ENCODE measurements at regions of chr1 and their contacts with region 1.

Region 1: GRCh38 chr1:155250633-155251449 is 4.4 kb downstream of the ENTREP3 start:
- DNase-seq: peak; percentile 91 to 98
- ATAC-seq: peak; percentile 82 to 92
- H3K4me3 ChIP-seq: no peak overlapping the region
- H3K27ac ChIP-seq: peak overlapping the region in 1 of 2 experiments; percentile 76; a peak in 3 of 6 replicates
- H3K4me1 ChIP-seq: peaks cover 19% of the 10 kb centered on the region
- CTCF ChIP-seq: peak; percentile 99
- EP300 ChIP-seq: no peak
- POLR2A ChIP-seq: no peak
- RAD21 ChIP-seq: peak; percentile 88 to 90

Region 2: GRCh38 chr1:154747740-154748404 is 503.0 kb before region 1 on chr1:
- CTCF ChIA-PET with region 1: no interaction called
- POLR2A ChIA-PET with region 1: no interaction called
- DNase-seq: no peak
- ATAC-seq: no peak
- H3K4me3 ChIP-seq: no peak overlapping the region
- H3K27ac ChIP-seq: no peak overlapping the region
- H3K4me1 ChIP-seq: no peaks in the 10 kb centered on the region
- CTCF ChIP-seq: no peak
- EP300 ChIP-seq: no peak
- POLR2A ChIP-seq: no peak
- RAD21 ChIP-seq: no peak

Region 3: DNA sequence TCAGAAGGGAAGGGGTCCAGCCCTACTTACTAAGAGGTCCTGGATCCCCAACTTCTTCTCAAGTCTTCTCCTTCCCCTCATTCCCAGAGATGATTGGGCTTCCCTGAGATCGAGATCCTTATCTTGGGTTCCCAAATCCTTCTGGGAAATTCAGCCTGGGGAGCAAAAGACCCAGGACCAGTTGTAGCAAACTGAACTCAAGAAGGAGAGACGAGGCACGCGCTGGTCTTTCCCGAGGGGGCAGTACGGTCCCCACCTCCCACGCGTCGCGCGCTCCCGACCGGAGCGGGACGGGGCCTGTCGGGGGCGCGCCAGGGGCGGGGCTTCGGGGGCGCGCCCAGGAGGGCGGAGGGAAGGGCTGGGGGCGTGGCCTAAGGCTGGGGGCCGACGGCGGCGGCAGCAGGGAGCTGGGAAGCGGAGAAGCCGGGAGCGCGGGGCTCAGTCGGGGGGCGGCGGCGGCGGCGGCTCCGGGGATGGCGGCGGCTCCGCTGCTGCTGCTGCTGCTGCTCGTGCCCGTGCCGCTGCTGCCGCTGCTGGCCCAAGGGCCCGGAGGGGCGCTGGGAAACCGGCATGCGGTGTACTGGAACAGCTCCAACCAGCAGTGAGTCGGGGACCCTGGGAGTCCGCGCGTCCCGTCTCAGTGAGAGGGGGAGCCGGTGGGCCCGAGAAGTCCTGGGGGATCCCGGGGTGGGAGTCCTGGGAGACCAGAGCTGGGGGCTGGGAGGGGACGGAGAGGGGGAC is 172.2 kb before region 1 on chr1 and contains the start of gene EFNA3:
- CTCF ChIA-PET with region 1: no interaction called
- POLR2A ChIA-PET with region 1: no interaction called
- DNase-seq: peak; percentile 50 to 77
- ATAC-seq: peak; percentile 9 to 41; a peak in 4 of 6 replicates
- H3K4me3 ChIP-seq: peak within 1 kb of the TSS; percentile 55
- H3K27ac ChIP-seq: peak within 1 kb of the TSS; percentile 50 to 78; a peak in 5 of 6 replicates
- H3K4me1 ChIP-seq: peaks cover 44% of the 10 kb centered on the region
- CTCF ChIP-seq: no peak
- EP300 ChIP-seq: no peak
- POLR2A ChIP-seq: no peak
- RAD21 ChIP-seq: no peak
- polyA plus RNA-seq, gene EFNA3: 1.9 and 2.6 TPM in 2 replicates

Region 4: DNA sequence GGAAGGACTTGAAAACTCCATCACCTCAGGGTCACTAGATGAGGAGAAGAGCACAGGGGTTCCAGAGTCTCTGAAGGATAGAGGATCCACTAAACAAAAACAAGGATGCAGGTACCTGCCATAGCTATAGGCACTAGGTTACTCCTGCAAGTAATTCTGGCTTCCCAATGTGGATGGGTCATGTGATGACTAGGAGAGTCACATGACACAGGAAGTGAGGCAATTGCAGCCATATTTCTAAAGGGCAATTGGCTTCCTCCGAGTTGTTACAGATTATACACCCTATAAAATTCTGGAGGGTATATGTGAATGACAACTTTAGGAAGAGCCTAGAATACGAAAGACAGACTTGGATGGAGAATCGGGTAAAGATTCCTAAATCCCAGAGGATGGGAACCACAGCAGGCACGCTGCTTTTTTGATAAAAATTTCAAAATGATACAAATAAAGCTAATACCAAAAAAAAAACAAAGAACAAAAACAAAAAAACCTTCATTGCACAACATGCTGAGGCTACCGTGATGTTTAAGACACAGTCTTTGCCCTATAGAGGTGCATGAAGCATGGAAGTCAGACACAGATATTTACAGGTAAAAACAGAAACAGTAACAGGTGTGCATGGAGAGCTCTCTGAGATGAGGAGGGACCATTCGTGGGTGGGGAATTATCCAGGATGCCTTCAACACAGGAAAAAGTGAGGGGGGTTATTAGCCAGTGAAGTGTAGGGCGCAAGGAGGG is 31.8 kb before region 1 on chr1:
- CTCF ChIA-PET with region 1: interaction called, 27 read pairs
- POLR2A ChIA-PET with region 1: no interaction called
- DNase-seq: peak in 1 of 2 experiments; percentile 62
- ATAC-seq: peak in 1 of 2 experiments; percentile 37; a peak in 3 of 6 replicates
- H3K4me3 ChIP-seq: no peak overlapping the region
- H3K27ac ChIP-seq: no peak overlapping the region
- H3K4me1 ChIP-seq: peaks cover 15% of the 10 kb centered on the region
- CTCF ChIP-seq: no peak
- EP300 ChIP-seq: no peak
- POLR2A ChIP-seq: no peak
- RAD21 ChIP-seq: no peak

Region 5: GRCh38 chr1:155261852-155262673 is 11.2 kb after region 1 on chr1 and contains the start of gene SCAMP3:
- CTCF ChIA-PET with region 1: interaction called, 326 read pairs
- POLR2A ChIA-PET with region 1: interaction called, 13 read pairs
- DNase-seq: peak; percentile 99 to 100
- ATAC-seq: peak; percentile 96 to 98
- H3K4me3 ChIP-seq: peak within 1 kb of the TSS; percentile 86
- H3K27ac ChIP-seq: peak within 1 kb of the TSS; percentile 88 to 97
- H3K4me1 ChIP-seq: peaks cover 14% of the 10 kb centered on the region
- CTCF ChIP-seq: no peak
- EP300 ChIP-seq: no peak
- POLR2A ChIP-seq: peak; percentile 84
- RAD21 ChIP-seq: no peak
- polyA plus RNA-seq, gene SCAMP3: 135 and 147 TPM in 2 replicates

Region 6: DNA sequence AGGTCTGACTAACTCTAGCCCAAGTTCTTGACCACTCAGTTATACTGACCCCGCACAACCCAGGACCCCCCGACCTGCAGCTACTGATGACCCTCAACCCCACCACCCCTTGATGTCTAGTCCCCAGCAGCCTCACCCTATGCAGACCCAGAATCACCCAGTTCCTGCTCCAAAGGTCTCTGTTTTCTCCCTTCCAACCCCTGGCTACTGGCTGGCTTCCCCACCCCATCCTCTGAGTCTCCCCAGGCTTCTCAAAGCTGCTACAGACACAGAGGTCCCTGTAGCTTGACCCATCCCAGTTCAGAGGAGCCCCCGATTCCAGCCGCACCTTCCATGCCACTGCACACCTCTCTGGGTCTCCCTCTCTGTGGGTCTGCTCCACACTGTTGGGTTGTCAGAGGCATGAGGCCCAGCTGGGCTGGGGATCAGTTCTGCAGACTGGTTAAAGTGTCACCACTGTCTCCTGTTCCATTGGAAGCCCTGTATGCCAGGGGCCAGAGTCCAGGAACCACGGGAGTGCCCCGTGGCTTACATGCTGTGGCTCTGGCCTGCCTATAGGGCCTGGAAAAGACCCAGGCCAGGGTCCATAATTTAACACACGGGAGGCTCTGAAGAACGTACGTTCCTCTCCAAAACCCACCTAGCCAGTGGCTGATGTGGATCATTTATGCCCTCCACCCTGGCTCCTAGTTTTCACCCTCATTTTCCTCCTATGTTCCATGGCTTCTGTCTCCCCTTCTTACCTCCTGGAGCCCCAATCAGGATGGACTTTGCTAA is 49.9 kb after region 1 on chr1:
- CTCF ChIA-PET with region 1: interaction called, 54 read pairs
- POLR2A ChIA-PET with region 1: interaction called, 3 read pairs
- DNase-seq: no peak
- ATAC-seq: no peak; a peak in 2 of 6 replicates
- H3K4me3 ChIP-seq: no peak overlapping the region
- H3K27ac ChIP-seq: no peak overlapping the region
- H3K4me1 ChIP-seq: peaks cover 9% of the 10 kb centered on the region; the same call in 2 of the 3 replicates
- CTCF ChIP-seq: no peak
- EP300 ChIP-seq: no peak
- POLR2A ChIP-seq: no peak
- RAD21 ChIP-seq: no peak

Region 7: GRCh38 chr1:155339515-155340097 is 88.8 kb after region 1 on chr1:
- CTCF ChIA-PET with region 1: interaction called, 18 read pairs
- POLR2A ChIA-PET with region 1: no interaction called
- DNase-seq: no peak
- ATAC-seq: no peak; a peak in 1 of 6 replicates
- H3K4me3 ChIP-seq: no peak overlapping the region
- H3K27ac ChIP-seq: no peak overlapping the region
- H3K4me1 ChIP-seq: no peaks in the 10 kb centered on the region
- CTCF ChIP-seq: no peak
- EP300 ChIP-seq: no peak
- POLR2A ChIP-seq: no peak
- RAD21 ChIP-seq: no peak

Region 8: GRCh38 chr1:155648551-155649147 is 397.8 kb after region 1 on chr1:
- CTCF ChIA-PET with region 1: interaction called, 29 read pairs
- POLR2A ChIA-PET with region 1: no interaction called
- DNase-seq: peak; percentile 85 to 87
- ATAC-seq: peak; percentile 93 to 96
- H3K4me3 ChIP-seq: peak overlapping the region; percentile 36; the same call in 2 of the 3 replicates
- H3K27ac ChIP-seq: peak overlapping the region; percentile 81 to 92
- H3K4me1 ChIP-seq: peaks cover 67% of the 10 kb centered on the region
- CTCF ChIP-seq: peak; percentile 77
- EP300 ChIP-seq: no peak
- POLR2A ChIP-seq: no peak
- RAD21 ChIP-seq: peak; percentile 84 to 85

Measured in A549 (cell line).